AG04450 (cell line): ENCODE measurements at regions of chr3 and their contacts with region 1.

Region 1: DNA sequence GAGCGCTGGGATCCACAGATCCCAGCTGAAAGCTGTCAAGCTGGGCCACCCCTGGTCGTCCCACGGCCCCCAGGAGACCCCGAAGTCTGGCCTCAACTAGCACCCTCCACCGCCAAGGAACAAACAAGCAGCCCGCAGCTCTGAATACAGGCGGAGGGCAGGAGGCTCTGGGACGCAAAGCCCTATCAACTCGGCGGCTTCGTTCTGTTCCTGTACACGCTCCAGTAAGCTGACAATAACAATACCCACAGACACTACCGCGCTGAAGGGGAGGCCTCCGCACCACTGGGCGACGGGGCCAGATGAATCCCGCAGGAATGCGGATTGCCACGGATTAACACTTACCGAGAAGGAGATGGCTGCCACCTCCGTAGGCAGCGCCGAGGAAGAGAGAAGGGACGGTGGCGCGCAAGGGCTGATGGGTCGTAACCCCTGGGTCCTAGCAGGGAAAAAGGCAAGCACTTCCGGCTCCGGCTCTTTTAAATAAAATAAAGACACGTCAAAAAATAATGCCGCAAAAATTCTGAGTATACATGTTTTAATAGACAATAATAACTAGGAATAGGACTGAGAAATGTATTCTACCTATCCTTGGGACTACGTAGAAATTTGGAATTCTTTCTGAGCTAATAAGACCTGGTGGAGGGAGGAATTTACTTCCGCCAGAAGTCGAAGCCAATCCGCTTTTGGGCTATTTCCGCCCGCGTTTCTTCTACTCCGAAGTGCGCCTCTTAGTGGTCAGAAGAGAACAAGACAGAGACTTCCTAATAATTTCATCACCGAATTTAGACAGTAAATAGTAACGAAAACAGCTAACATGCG is at the start of gene RPL32:
- DNase-seq: peak; percentile 93
- H3K4me3 ChIP-seq: peak within 1 kb of the TSS; percentile 98
- H3K27ac ChIP-seq: peak within 1 kb of the TSS; percentile 87
- H3K27me3 ChIP-seq: no peaks in the 10 kb centered on the region
- CTCF ChIP-seq: peak; percentile 81
- polyA plus RNA-seq, gene RPL32: 3,211 and 3,269 TPM in 2 replicates

Region 2: GRCh38 chr3:12796171-12797123 is 44.9 kb before region 1 on chr3 and contains the start of gene CAND2:
- CTCF ChIA-PET with region 1: interaction called, 15 read pairs
- POLR2A ChIA-PET with region 1: no interaction called
- DNase-seq: no peak
- H3K4me3 ChIP-seq: peak within 1 kb of the TSS; percentile 79
- H3K27ac ChIP-seq: peak within 1 kb of the TSS; percentile 11
- H3K27me3 ChIP-seq: no peaks in the 10 kb centered on the region
- CTCF ChIP-seq: 0 out of 2 replicates have a peak, but pooled peaks have one; percentile 4
- polyA plus RNA-seq, gene CAND2: 5.8 and 7.3 TPM in 2 replicates

Region 3: GRCh38 chr3:12810013-12810780 is 31.2 kb before region 1 on chr3:
- CTCF ChIA-PET with region 1: interaction called, 6 read pairs
- POLR2A ChIA-PET with region 1: interaction called, 10 read pairs
- DNase-seq: peak; percentile 66
- H3K4me3 ChIP-seq: peak overlapping the region; percentile 59
- H3K27ac ChIP-seq: no peak overlapping the region
- H3K27me3 ChIP-seq: no peaks in the 10 kb centered on the region
- CTCF ChIP-seq: peak; percentile 76

Region 4: DNA sequence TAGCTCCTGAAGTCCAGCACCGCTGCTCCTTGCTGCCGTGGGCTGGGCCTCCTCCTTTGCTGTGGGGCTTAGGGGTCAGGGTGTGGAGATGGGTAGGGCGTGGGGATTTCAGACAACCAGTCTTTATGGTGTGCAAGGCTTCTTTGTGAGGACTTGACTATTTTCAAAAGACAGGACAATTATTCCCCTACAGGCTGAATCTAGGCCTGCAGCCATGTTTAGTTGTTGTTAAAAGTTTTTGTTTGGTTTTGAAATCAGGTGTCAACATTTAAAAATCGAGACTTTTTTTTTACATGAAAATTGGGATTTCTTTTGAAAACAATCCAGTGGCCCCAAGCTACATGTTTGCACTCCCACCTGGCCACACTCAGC is 10.6 kb before region 1 on chr3:
- CTCF ChIA-PET with region 1: interaction called, 12 read pairs
- POLR2A ChIA-PET with region 1: interaction called, 16 read pairs
- DNase-seq: no peak
- H3K4me3 ChIP-seq: no peak overlapping the region
- H3K27ac ChIP-seq: no peak overlapping the region
- H3K27me3 ChIP-seq: no peaks in the 10 kb centered on the region
- CTCF ChIP-seq: peak; percentile 34; the same call in 1 of the 2 replicates

Region 5: DNA sequence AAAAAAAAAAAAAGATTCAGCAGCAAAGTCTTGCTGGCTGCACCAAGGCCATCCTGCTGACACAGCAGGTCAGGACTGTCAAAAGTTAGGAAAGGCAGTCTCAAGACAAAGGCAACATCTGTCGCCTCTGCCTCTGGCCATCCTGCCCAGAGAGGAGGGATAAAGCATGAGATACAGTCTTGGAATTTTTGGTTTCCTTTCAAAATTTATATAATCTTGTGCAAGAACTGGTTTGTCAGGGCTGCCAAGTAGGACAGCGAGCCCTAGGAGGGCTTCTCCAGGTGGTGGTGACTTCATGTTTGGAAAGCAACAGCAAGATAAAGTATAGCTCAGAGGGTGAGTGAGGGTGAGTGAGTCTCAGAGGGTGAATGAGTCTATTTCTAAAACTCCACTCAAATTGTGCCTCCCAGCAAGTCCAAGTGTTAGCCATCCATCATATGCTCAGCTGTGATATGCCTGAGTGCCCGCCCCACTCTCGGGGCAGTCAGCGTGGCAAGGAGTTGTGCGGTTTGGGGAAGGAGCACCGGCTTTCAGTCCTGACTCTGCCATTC is 11.9 kb after region 1 on chr3:
- CTCF ChIA-PET with region 1: interaction called, 28 read pairs
- POLR2A ChIA-PET with region 1: interaction called, 8 read pairs
- DNase-seq: peak; percentile 61
- H3K4me3 ChIP-seq: no peak overlapping the region
- H3K27ac ChIP-seq: no peak overlapping the region
- H3K27me3 ChIP-seq: peaks cover 31% of the 10 kb centered on the region
- CTCF ChIP-seq: no peak

Region 6: DNA sequence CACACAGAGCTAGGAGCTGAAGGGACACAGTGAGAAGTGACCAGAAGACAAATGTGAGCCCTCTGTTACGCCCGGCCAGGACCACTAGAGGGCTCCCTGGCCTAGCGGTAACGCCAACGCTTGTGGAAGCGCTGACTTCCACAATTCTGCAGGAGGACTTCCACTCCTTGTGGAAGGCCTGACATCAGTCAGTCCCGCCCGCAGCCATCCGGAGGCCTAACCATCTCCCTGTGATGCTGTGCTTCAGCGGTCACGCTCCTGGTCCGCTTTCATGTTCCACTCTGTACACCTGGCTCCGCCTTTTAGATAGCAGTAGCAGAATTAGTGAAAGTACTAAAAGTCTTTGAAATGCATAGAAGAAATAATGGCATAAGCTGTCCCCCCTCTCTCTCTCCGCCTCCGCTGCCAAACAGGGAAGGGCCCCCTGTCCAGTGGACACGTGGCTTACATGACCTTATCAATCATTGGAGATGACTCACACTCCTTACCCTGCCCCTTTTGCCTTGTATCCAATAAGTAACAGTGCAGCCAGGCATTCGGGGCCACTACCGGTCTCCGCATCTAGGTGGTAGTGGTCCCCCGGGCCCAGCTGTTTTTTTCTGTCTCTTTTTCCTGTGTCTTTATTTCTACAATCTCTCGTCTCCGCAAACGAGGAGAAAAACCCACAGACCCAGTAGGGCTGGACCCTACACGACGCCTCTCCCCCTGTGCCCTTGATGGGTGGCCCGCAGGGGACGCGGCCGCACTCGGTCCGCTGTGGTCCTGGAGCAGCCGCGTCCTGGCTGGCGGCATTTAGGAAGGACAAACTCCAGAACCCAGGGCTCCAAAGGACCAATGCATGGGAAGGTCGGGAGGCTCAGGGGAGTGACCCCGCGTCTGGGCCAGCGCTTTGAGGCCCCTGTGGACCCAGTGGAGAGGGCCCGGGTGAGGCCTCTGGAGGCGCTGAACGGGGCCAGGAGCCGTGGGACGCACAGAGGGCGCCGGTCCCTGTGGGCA is 27.0 kb after region 1 on chr3:
- CTCF ChIA-PET with region 1: interaction called, 14 read pairs
- POLR2A ChIA-PET with region 1: no interaction called
- DNase-seq: peak; percentile 61
- H3K4me3 ChIP-seq: 0 out of 2 replicates have a peak overlapping the region, but pooled peaks have one; percentile 13
- H3K27ac ChIP-seq: no peak overlapping the region
- H3K27me3 ChIP-seq: peaks cover 42% of the 10 kb centered on the region
- CTCF ChIP-seq: peak; percentile 95

Region 7: DNA sequence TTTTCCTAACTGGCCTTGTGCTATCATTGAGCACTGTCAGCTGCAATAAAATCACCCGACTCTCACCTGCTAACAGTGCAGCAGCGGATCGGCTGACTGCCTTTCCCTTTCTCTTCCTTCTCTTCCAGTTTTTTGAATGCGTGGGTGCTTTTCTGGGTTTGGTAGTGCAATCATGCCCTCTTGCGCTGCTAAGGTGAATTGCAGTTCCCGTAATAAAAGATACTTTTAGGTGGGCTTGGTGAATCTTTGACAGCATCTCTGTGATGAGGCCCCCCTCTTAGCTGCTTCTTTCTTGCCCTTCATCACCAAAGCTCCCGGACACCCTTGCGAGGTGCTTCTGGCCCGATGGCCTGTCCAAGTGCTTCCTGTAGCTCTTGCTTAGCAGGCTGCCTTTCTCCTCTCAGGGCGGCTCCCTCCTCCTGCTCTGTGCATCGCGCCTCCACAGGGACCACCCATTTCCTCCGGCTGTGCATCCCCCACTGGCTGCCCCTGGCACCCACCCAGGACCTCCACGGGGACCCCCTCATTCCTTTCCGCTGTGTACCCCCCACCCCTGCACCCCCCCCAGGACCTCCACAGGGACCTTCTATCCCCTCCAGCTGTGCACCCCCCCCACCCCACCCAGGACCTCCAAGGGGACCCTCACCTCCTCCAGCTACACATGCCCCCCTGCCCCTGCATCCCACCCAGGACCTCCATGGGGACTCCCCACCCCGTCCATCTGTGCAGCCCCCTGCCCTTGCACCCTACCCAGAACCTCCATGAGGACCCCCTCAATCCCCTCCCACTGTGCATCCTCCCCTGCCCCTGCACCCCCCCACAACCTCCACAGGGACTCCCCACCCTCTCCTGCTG is 50.9 kb after region 1 on chr3:
- CTCF ChIA-PET with region 1: interaction called, 18 read pairs
- POLR2A ChIA-PET with region 1: interaction called, 6 read pairs
- DNase-seq: peak; percentile 32
- H3K4me3 ChIP-seq: peak overlapping the region; percentile 44
- H3K27ac ChIP-seq: no peak overlapping the region
- H3K27me3 ChIP-seq: peaks cover 16% of the 10 kb centered on the region
- CTCF ChIP-seq: peak; percentile 94

Region 8: DNA sequence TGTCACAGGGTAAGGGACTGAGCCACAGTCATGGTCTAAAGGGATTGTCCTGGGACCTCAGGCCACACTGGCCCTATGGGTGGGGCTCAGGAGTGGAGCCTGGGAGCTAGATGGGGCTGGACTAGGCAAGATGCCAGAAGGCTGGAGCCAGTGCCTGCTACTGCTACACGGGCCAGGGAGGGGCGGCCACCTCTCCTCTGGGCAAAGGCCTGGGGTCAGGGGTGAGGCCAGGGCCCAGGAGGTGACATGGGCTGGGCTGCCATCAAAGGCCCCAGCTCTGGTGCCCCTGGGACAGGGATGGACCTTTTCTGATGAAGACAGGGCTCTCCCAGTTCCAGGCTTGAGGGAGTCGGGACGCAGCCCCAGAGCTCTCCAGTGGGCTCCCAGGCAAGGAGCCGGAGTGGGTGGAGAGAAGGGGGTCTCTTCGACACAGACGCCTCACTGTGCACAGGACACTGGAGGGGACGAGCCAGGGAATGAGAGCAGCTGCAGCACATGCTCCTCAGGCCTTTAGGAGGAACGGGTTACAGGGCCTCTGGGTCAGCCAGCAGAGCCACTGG is 294.0 kb after region 1 on chr3:
- CTCF ChIA-PET with region 1: no interaction called
- POLR2A ChIA-PET with region 1: no interaction called
- DNase-seq: no peak
- H3K4me3 ChIP-seq: no peak overlapping the region
- H3K27ac ChIP-seq: no peak overlapping the region
- H3K27me3 ChIP-seq: no peaks in the 10 kb centered on the region
- CTCF ChIP-seq: no peak